Sigmoid colon (tissue), 7 donors: ENCODE measurements at regions of chr17 and their contacts with region 1.

Region 1: DNA sequence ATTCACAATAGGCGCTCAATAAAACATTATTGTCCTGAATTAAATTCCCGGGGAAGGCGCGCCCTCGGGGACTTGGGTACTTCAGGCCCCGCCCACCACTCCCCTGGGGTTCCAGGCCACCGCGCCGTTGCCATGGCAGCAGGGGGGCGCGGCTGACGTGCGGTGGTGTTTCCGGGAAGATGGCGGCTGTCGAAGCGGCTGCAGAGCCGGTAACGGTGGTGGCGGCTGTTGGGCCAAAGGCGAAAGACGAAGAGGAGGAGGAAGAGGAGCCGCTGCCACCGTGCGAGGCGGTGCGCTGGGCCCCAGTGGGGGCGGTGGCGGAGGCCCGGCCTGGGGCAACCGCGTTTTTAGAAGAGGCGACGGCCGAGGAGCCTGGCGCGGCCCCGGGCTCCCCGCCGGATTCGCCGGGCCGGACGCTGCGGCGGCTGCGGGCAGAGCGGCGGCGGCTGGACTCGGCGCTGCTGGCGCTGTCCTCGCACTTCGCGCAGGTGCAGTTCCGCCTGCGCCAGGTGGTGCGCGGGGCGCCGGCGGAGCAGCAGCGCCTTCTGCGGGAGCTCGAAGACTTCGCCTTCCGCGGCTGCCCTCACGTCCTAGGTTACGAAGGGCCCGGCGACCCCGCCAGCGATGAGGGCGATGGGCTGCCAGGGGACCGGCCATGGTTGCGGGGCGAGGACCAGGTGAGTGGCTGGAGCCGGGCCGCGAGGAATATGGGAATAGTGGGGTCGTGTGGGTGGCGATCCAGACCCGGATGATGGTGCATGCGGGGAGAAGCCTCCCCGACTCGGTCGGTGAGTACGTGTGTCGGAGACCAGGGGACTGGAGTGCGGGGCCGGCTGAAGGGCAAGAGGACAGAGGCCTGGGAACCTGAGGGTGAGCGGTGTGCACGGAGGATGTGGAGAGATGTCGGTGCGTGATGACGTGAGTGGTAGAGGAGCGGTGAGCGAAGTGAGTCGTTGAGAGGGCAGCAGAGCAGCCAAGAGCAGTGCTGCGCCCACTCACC is at the start of gene RUNDC1:
- DNase-seq: peak; percentile 95
- H3K4me3 ChIP-seq: peak within 1 kb of the TSS; percentile 73 to 96 (median 86)
- H3K27ac ChIP-seq: peak within 1 kb of the TSS; percentile 84 to 88 (median 86)
- H3K4me1 ChIP-seq: peaks cover 0 to 32% (median 22%) of the 10 kb centered on the region in 4 donors
- H3K27me3 ChIP-seq: no peaks in the 10 kb centered on the region
- CTCF ChIP-seq: no peak
- EP300 ChIP-seq: no peak
- POLR2A ChIP-seq: peak; percentile 45 to 56
- total RNA-seq, gene RUNDC1: 10.0 to 13.8 (median 12.1) TPM

Region 2: GRCh38 chr17:42997984-42998938 is 17.6 kb after region 1 on chr17 and contains the start of gene RPL27:
- intact Hi-C with region 1: loop called (anchors 2 kb)
- DNase-seq: peak; percentile 100
- H3K4me3 ChIP-seq: peak within 1 kb of the TSS; percentile 66 to 88 (median 79)
- H3K27ac ChIP-seq: peak within 1 kb of the TSS; percentile 93 to 97 (median 94)
- H3K4me1 ChIP-seq: peaks cover 0 to 22% (median 22%) of the 10 kb centered on the region in 4 donors
- H3K27me3 ChIP-seq: no peaks in the 10 kb centered on the region
- CTCF ChIP-seq: peak; percentile 80 to 98 (median 87)
- EP300 ChIP-seq: peak in 2 of 4 donors; percentile 42 to 85
- POLR2A ChIP-seq: peak; percentile 75 to 88
- total RNA-seq, gene RPL27: 1,576 to 2,828 (median 2,217) TPM

Region 3: GRCh38 chr17:43024407-43025289 is 44.0 kb after region 1 on chr17 and contains the start of gene RND2:
- intact Hi-C with region 1: no loop called
- DNase-seq: peak; percentile 97
- H3K4me3 ChIP-seq: peak within 1 kb of the TSS; percentile 37 to 63 (median 54)
- H3K27ac ChIP-seq: peak within 1 kb of the TSS; percentile 79 to 86 (median 81)
- H3K4me1 ChIP-seq: peaks cover 0 to 33% (median 23%) of the 10 kb centered on the region in 4 donors
- H3K27me3 ChIP-seq: no peaks in the 10 kb centered on the region
- CTCF ChIP-seq: peak; percentile 58 to 86 (median 76)
- EP300 ChIP-seq: no peak
- POLR2A ChIP-seq: peak in 1 of 2 donors; percentile 7
- total RNA-seq, gene RND2: 2.5 to 4.6 (median 2.8) TPM